GM18951 (cell line): ENCODE measurements at regions of chr13 and their contacts with region 1.

Region 1: DNA sequence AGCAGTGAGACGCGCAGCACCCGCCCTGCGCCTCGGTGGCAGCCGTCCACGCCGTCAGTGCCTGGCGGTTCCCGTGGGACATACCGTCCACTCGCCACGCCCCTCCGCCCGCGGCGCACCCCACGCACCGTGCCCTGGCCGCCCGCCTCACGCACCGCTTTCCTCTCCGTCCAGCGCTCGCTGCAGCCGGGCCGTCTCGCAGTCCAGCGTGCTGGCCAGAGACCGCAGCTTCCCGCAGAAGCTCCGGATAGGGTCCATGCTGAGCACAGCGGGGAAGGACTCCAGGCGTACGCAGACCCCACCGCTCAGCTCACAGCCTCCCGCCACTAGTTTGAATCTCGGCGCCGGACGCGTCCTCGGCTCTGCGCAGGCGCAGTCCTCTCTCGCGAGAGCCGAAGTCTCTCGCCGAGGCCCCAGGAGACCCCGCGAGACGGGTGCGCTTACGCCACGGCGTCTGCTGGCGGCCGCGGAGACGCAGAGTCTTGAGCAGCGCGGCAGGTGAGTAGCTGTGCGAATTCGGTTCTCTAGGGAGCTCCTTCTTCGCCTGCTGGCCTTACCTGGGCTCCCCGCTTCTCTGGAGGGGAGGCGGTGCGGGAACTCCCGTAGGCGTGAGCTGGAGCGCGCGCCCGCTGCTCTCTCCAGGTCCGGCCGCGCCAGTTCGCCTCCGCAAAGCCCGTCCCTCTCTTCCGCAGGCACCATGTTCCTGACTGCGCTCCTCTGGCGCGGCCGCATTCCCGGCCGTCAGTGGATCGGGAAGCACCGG is at the starts of genes MRPL57 and SKA3:
- POLR2A ChIP-seq: peak; percentile 99

Region 2: DNA sequence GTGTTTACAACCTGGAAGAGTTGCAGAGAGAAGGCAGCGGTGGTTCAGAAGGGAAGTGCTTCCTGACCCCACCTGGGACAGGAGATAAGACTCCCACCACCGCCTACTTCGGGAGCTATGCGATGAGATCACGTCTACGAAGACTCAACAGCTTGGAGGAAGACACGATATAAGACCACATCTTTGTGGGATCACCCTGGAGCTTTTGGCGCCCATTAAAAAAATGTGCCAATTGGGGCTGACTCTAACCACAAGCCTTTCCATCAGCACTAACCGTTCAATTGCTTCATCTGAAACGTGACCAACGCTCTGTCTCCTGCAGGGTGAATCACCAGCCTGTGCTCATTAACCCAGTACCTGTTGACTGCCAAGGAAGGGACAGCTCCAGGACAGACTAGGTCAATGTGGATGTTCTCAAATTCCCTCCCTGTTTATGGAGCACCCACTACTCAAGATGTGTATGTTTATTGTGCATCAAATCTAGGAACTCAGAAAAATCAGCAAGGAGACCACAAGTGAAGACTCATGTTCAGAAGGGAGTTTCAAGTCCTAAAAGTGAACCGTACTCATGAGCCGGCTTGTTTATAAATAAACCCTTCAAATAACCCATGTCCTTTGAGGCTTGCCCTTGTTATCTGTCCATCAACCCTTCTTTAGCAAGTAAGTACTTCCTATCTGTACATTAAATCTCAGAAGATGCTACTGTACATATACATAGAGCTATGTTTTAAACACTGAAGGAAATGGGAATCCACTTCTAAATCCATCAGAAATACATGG is 182.6 kb before region 1 on chr13:
- in situ Hi-C with region 1: no loop called
- POLR2A ChIP-seq: no peak

Region 3: GRCh38 chr13:21050288-21051197 is 125.9 kb before region 1 on chr13:
- in situ Hi-C with region 1: no loop called
- POLR2A ChIP-seq: no peak

Region 4: DNA sequence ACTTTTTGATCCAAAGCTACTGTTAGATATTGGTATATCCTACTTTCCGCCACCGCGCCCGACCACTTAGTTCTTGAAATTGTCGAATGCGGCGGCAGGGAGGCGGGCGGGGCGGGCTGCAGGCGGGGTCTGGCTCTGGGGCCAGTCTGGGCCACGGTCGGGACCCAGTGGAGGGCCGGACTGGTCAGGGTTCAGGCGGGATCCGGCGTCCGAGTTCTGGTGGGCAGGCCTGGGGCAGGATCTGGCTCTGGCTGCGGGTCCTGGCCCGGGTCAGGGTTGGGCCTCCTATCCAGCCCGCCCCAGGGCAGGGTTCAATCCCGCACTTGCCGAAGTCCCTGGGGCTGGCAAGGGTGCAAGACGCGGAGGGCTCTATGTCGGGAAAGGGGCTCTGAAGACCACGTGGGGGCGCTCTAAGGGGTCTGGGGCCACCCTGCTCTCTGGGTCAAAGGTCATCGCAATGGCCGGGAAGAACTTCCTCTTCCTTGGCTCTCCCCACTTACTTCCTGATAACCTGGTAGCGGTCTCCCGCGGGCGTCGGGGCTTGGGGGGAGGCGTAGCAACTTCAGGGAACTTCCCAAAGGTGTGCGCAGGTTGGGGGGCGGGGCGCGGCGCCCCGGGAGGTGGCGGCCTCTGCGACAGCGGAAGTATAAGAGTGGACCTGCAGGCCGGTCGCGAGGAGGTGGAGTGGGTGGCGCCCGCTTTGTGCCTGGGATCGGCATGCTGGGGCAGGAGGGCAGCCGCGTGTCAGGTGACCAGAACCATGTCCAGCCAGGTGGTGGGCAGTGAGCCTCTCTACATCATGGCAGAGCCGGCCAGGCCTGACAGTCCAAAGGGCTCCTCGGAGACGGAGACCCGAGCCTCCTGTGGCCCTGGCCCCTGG is 83.4 kb after region 1 on chr13:
- in situ Hi-C with region 1: loop called (anchors 10 kb)
- POLR2A ChIP-seq: no peak

Region 5: GRCh38 chr13:21703824-21704499 is 527.6 kb after region 1 on chr13:
- in situ Hi-C with region 1: no loop called
- POLR2A ChIP-seq: no peak